ENCODE measurements at regions of chr17 and their contacts with region 1.

Region 1: DNA sequence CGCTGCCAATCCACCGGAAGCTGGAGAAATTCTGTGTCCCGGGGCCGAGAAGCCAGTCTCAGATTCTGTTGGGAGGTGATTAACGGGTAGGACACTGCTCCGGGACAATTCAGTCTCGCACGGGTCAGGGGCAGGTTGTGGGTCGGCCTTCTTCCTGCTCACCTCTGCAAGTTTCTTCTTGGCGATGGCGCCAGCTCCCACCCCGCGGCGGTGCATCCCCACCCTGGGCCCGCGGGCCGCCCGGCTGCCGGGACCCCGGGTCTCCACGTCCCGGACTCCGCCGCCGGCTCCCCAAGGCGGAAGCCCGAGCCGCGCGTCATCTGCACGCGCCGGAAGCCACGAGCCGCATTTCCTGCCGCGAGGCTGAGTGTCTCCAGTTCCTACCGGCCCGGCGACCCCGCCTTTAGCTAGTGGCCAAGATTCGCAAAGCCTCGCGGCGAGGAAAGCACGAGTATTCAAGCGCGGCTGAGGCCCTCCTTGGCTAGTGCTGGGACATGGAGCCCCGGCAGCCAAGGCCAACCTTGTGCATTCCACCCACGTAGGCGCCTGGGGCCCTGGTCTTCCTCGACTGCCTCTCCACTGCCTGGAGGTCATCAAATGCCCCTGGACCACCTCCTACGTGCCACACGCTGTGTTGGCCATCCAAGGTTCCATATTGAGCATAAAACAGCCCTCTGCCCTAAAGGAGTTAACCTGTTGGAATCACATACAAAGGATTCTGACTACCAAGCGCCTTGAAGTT is at the start of gene SNF8:
- DNase-seq: peak; percentile 65 to 83
- ATAC-seq: peak; percentile 90 to 92
- H3K4me3 ChIP-seq: peak within 1 kb of the TSS; percentile 84 to 95 (median 87)
- H3K27ac ChIP-seq: peak within 1 kb of the TSS; percentile 83 to 88 (median 84)
- H3K4me1 ChIP-seq: peaks cover 10 to 18% of the 10 kb centered on the region in 2 donors
- H3K27me3 ChIP-seq: peaks cover 0 to 4% (median 3%) of the 10 kb centered on the region in 3 donors
- CTCF ChIP-seq: no peak
- POLR2A ChIP-seq: peak; percentile 69 to 79
- total RNA-seq, gene SNF8: 64.9 to 123 (median 76.8) TPM

Region 2: DNA sequence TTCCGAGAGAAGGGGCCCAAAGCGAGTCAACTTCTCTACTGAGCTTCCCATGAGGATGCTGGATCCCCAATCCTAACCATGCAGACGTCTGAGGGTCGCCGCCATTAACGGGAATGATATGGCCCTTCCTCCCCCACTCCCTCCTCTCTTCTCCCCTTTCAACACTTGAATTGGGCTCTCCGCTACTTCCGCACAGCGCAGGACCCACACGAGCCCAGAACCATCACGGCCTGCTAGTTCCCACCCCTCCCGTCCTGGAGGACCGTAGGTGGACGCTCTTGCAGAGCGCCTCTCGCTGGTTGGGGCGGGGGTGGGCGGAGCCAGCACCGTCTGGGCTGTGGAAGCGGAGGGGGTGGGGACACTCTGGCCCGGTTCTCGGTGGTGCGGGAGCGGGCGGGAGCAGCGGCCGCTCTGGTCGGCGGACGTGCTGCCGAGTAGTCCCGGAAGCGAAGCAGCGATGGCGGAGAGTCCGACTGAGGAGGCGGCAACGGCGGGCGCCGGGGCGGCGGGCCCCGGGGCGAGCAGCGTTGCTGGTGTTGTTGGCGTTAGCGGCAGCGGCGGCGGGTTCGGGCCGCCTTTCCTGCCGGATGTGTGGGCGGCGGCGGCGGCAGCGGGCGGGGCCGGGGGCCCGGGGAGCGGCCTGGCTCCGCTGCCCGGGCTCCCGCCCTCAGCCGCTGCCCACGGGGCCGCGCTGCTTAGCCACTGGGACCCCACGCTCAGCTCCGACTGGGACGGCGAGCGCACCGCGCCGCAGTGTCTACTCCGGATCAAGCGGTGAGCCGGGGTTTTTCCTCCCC is 36.4 kb before region 1 on chr17 and contains the start of gene UBE2Z:
- in situ Hi-C with region 1: no loop called
- intact Hi-C with region 1: loop called (anchors 1 kb)
- DNase-seq: peak; percentile 88 to 93
- ATAC-seq: peak; percentile 96 to 98
- H3K4me3 ChIP-seq: peak within 1 kb of the TSS; percentile 68 to 82 (median 70)
- H3K27ac ChIP-seq: peak within 1 kb of the TSS; percentile 78 to 86 (median 84)
- H3K4me1 ChIP-seq: peaks cover 19 to 22% of the 10 kb centered on the region in 2 donors
- H3K27me3 ChIP-seq: no peaks in the 10 kb centered on the region
- CTCF ChIP-seq: peak in 2 of 5 experiments; percentile 11 to 23
- POLR2A ChIP-seq: peak; percentile 86 to 88
- total RNA-seq, gene UBE2Z: 32.7 to 41.1 (median 35.4) TPM

Measured in gastrocnemius medialis (tissue), 4 donors.